ENCODE measurements at regions of chr15 and their contacts with region 1.

Region 1: DNA sequence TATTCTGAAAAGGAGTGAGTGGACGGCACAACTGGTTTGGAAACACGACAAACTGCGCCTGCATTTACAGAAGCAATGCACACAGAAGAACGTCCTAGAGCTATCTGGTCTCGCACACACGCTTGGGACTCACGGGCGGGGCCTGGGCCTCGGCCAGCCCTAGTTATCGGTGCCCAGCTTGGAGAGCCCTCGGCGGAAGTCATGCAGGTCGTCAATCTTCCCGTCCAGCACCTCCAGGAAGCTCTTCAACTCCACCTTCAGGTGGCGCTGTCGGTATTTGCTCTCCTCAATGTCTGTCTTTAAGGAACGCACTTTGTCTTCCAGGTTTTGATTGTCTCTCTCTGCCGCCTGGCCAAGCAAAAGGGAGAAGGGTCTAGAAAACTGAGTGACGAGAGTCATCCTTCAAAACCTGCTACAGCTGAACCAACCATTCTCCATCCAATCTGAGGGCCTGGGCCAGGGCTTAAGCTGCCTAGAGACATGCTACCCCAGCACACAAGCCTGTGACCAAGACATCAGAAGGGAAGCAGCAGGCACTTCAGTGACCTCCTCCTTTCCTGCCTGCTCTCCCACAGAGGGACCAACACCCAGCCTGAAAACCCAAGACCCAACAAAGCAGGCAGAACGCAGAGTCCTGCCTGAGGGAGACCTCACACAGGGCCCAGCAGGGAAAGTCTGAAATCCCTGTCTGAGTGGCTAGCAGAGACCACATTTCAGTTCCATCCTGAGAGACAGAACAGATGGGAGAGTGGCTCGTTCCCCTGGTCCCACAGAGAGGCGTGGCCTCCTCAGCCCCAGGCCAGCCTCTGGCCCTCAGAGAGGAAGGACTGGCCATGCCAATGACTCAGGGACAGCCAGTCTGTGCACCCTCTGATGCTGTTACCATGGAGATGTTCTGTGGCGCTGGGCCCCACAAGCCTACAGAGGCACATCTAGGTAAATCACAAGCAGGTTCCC is 40.4 kb downstream of the WHAMM start:
- DNase-seq: peak; percentile 75 to 86 (median 78)
- ATAC-seq: peak; percentile 80 to 93 (median 90)
- H3K4me3 ChIP-seq: no peak overlapping the region
- H3K27ac ChIP-seq: peak overlapping the region in 3 of 4 donors; percentile 17 to 66 (median 59)
- H3K4me1 ChIP-seq: peaks cover 8 to 12% (median 9%) of the 10 kb centered on the region in 3 donors
- H3K27me3 ChIP-seq: no peaks in the 10 kb centered on the region
- CTCF ChIP-seq: peak; percentile 60 to 79 (median 67)

Region 2: GRCh38 chr15:82540055-82540983 is 309.5 kb before region 1 on chr15 and contains the start of gene RPS17:
- intact Hi-C with region 1: no loop called
- DNase-seq: peak; percentile 94 to 100 (median 97)
- ATAC-seq: peak; percentile 94 to 98 (median 95)
- H3K4me3 ChIP-seq: peak within 1 kb of the TSS; percentile 88 to 96 (median 94)
- H3K27ac ChIP-seq: peak within 1 kb of the TSS; percentile 56 to 91 (median 86)
- H3K4me1 ChIP-seq: peaks cover 0 to 20% (median 7%) of the 10 kb centered on the region in 3 donors
- H3K27me3 ChIP-seq: no peaks in the 10 kb centered on the region
- CTCF ChIP-seq: peak; percentile 99 to 100 (median 100)
- total RNA-seq, gene RPS17: 751 to 1,395 (median 1,053) TPM

Region 3: GRCh38 chr15:82699726-82700125 is 150.1 kb before region 1 on chr15:
- intact Hi-C with region 1: no loop called
- DNase-seq: peak in 1 of 6 donors; percentile 18
- ATAC-seq: no peak
- H3K4me3 ChIP-seq: no peak overlapping the region
- H3K27ac ChIP-seq: no peak overlapping the region
- H3K4me1 ChIP-seq: no peaks in the 10 kb centered on the region
- H3K27me3 ChIP-seq: no peaks in the 10 kb centered on the region
- CTCF ChIP-seq: no peak

Region 4: DNA sequence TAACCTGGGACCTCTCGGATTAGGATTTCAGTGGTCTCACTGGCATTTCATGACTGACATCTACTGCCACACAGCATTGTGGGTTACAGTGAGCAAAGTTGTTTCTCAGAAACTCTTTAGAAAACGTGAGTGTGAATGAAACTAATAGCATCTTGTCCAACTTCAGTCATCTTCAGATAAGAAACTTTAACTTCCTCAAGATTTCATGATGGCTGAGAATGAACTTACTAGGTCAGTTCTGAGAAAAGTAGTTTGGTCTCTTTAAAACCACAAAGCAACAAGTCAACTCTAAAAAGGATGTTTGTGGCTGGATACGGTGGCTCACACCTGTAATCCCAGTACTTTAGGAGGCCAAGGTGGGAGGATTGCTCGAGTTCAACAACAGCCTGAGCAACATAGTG is 116.8 kb after region 1 on chr15:
- intact Hi-C with region 1: loop called in 1 of 3 experiments (anchors 10 kb)
- DNase-seq: no peak
- ATAC-seq: no peak
- H3K4me3 ChIP-seq: no peak overlapping the region
- H3K27ac ChIP-seq: no peak overlapping the region
- H3K4me1 ChIP-seq: peaks cover 11 to 30% (median 16%) of the 10 kb centered on the region in 3 donors
- H3K27me3 ChIP-seq: no peaks in the 10 kb centered on the region
- CTCF ChIP-seq: no peak

Region 5: DNA sequence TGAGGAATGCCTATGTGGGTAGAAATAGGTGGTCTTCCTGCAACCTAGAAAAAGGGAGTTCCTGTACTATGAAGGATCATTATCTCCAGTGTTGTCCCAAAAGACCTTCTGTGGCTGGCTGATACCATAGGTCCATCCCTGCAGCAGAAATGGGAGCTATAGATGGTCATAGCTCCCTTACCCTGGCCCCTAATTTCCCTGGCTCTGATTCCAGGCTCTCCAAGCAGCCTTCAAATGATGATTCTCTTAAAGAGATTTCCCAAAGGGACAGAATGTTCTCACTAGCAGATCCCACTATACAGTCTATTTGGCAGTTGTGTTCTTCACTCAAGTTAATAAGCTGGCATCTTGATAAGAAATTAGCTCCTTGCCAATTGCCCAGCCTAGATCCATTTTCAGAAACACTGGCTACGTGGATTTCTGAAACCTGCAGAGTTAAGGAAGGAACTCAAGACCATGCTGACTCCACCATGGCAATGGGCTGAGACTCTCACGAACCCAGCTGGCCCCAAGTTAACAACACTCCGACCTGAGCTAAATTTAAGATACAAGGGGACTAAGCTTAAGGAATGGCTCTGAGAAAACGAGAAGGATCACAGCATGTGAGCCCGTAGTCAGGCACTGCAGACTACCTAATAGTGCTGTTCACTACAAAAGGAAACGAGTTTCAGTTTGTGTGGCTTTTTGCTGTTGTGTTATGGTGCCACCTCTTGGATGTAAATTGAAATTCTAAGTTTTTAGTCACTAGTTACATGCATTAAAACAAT is 150.3 kb after region 1 on chr15:
- intact Hi-C with region 1: loop called in 1 of 3 experiments (anchors 5 kb)
- DNase-seq: peak in 1 of 6 donors; percentile 41
- ATAC-seq: peak; percentile 83 to 98 (median 94)
- H3K4me3 ChIP-seq: peak overlapping the region in 2 of 4 donors; percentile 18 to 31
- H3K27ac ChIP-seq: peak overlapping the region; percentile 6 to 63 (median 37)
- H3K4me1 ChIP-seq: peaks cover 0 to 4% (median 0%) of the 10 kb centered on the region in 3 donors
- H3K27me3 ChIP-seq: no peaks in the 10 kb centered on the region
- CTCF ChIP-seq: peak in 3 of 4 donors; percentile 18 to 41 (median 30)

Region 6: GRCh38 chr15:83036253-83036652 is 186.4 kb after region 1 on chr15:
- intact Hi-C with region 1: no loop called
- DNase-seq: no peak
- ATAC-seq: no peak
- H3K4me3 ChIP-seq: no peak overlapping the region
- H3K27ac ChIP-seq: no peak overlapping the region
- H3K4me1 ChIP-seq: no peaks in the 10 kb centered on the region
- H3K27me3 ChIP-seq: no peaks in the 10 kb centered on the region
- CTCF ChIP-seq: no peak